ENCODE measurements at regions of chr17 and their contacts with region 1.

Region 1: GRCh38 chr17:2828397-2829038 is 32.3 kb downstream of the RAP1GAP2 start:
- DNase-seq: peak; percentile 76
- H3K4me3 ChIP-seq: no peak overlapping the region
- H3K27ac ChIP-seq: no peak overlapping the region
- H3K4me1 ChIP-seq: peaks cover 0 to 4% (median 0%) of the 10 kb centered on the region in 4 donors
- H3K27me3 ChIP-seq: no peaks in the 10 kb centered on the region
- CTCF ChIP-seq: peak; percentile 86 to 93 (median 90)
- EP300 ChIP-seq: no peak
- POLR2A ChIP-seq: no peak

Region 2: GRCh38 chr17:3012926-3013581 is 184.5 kb after region 1 on chr17:
- intact Hi-C with region 1: loop called (anchors 1 kb)
- DNase-seq: peak; percentile 77
- H3K4me3 ChIP-seq: no peak overlapping the region
- H3K27ac ChIP-seq: no peak overlapping the region
- H3K4me1 ChIP-seq: peaks cover 0 to 4% (median 0%) of the 10 kb centered on the region in 4 donors
- H3K27me3 ChIP-seq: no peaks in the 10 kb centered on the region
- CTCF ChIP-seq: peak; percentile 67 to 89 (median 86)
- EP300 ChIP-seq: no peak
- POLR2A ChIP-seq: no peak